HEK293 (cell line): ENCODE measurements at regions of chr5 and their contacts with region 1.

Region 1: DNA sequence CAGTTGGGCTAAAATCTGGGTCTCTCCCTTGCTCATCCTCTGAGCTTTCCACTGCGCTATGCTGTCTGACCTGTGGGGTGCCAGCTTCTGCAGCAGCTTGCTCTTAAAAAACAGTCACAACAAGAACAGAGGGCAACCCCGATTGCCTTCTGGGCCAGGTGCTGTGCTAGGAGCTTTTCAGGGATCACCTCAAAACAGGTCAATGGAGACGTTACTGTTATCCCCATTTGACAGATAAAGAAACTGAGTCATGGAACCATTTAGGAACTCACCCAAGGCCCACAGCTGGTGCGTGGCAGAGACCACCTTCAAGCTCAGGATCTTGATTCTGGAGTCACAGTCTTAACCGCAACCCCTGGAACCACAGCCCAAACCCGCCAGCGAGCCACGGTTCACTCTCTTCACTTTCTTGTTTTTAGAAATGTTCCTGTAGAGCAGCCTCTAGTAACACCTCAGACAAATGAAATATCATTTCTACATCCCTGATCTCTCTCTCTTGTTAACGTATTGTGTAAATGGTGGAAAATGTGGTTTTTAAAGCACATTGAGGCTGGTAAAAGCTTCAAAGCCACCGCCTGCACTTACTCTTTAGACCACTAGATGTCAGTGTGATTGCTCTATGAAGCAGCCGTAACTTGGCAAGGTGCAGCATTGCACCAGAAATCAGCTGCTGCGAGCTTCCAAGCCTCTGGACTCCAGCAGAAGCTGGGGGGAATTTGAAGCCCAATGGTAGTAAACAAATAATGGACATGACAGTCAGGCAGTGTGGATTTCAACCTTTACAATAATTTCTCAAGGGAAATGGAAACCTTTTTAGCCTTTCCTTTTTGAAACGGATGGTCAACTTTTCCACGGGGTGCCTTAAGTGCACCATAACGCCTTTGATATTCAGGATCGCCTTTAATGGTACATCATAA is 1.7 kb downstream of the FYB1 start:
- H3K4me3 ChIP-seq: no peak overlapping the region
- H3K27ac ChIP-seq: no peak overlapping the region
- H3K4me1 ChIP-seq: no peaks in the 10 kb centered on the region
- CTCF ChIP-seq: peak; percentile 80

Region 2: DNA sequence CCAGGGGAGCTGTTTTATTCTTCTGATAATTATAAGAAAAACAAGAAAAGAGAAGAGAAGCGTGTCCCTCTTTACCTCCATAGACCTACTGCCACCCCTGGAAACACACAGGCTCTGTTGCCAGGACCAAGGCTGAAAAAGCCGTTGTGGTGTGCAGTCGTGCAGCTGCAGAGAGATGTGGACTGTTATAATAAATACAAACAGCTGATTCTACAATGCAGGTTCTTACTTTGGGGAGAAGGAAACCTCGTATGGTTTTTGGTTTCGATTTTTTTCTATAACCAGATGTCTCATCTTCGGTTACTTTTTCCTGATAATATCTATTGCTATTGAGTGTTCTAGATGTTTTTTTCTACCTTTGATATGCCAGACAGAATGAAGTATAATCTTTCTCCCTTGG is 26.4 kb before region 1 on chr5:
- CTCF ChIA-PET with region 1: interaction called, 18 read pairs
- POLR2A ChIA-PET with region 1: no interaction called
- H3K4me3 ChIP-seq: no peak overlapping the region
- H3K27ac ChIP-seq: no peak overlapping the region
- H3K4me1 ChIP-seq: no peaks in the 10 kb centered on the region
- CTCF ChIP-seq: no peak

Region 3: GRCh38 chr5:39231705-39232525 is 14.3 kb after region 1 on chr5:
- CTCF ChIA-PET with region 1: interaction called, 28 read pairs
- POLR2A ChIA-PET with region 1: no interaction called
- H3K4me3 ChIP-seq: no peak overlapping the region
- H3K27ac ChIP-seq: no peak overlapping the region
- H3K4me1 ChIP-seq: no peaks in the 10 kb centered on the region
- CTCF ChIP-seq: no peak

Region 4: DNA sequence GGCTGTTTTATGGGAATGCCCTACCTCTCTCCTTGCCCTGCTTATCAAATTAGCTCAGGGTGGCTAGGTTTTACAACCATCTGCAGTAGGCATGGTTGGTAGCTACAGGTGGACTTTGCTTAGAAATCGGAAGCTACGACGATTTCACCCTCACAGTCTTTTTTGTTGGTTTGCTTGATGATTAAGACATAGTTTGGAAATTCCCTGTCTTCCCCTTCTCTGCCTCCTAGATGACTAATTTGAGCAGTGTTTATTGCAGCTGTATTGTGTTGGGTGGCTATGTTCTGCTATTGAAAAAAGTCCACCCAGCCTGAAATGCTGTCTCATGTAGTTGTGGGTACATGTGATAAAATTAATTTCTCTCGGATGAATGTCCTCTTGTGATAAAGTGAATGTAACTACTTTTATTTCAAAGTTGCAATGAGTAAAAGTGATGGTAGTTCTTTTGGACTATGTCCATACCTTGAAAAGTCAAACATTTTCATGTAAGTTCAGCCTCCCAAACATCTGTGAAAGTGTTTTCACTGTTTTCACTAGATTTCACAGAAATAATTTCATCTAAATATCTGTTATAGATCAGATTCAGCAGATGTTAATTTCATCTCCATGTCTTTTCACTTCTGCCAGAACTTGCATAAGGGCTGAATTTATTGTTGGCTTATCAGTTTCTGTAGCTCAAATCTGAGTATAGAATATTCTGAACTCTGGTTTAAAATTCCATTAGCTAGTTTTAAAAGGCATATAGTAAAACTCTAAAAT is 39.0 kb after region 1 on chr5:
- CTCF ChIA-PET with region 1: no interaction called
- POLR2A ChIA-PET with region 1: no interaction called
- H3K4me3 ChIP-seq: no peak overlapping the region
- H3K27ac ChIP-seq: no peak overlapping the region
- H3K4me1 ChIP-seq: no peaks in the 10 kb centered on the region
- CTCF ChIP-seq: no peak

Region 5: DNA sequence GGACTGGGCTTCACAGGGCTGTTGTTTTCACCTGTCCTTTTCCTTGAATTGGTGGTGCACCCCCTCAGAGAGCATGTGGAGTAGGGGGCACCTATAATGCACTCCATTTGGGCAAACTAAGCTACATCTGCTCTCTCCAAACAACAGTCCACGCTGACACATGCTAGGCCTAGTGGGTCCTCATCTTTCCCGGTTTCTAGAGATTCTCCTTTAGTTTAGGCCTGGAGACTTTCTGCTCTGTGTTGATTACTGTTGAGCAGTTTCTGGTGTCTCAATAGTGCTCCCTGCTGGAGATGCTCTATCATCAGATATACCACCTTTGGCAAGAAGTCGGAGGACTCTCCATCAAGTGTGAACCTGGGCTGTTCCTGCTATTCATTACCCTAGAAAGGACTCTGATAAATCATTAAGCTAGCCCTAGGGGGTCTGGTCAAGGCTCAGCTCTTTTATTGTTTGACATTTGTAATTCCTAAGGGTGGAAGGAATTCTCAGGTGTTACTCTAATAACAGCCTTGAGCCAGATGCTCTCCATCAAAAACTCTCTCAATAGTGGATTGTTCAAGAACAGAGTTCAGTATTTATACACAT is 65.7 kb after region 1 on chr5:
- CTCF ChIA-PET with region 1: interaction called, 18 read pairs
- POLR2A ChIA-PET with region 1: no interaction called
- H3K4me3 ChIP-seq: no peak overlapping the region
- H3K27ac ChIP-seq: no peak overlapping the region
- H3K4me1 ChIP-seq: no peaks in the 10 kb centered on the region
- CTCF ChIP-seq: no peak

Region 6: DNA sequence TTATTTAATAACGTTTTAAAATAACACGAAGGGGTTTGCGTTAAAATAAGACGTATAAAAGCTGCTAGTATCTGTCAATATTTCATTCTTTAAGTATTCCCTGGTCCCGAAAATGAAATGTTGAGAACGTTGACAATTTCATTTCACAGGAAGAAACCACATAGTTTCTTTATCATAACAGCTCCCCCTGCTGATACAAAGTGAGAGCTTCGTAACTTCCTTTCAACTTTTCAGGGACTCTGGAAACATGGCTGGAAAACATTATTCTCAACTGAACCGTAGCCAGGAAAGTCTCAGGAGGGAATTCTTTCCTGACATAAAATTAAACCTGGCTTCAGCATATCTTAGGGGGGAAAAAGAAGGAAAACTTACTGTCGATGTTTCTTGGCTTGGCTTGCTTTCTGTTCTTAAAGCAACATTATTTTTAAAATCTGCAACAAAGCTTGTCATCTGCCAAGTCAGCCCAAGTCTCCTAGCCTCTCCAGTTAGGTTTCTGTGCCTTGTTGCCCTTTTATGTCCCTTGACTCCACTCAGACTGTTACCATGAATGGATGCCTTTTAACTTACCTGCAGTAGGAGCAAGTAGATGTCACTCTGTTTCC is 330.0 kb after region 1 on chr5:
- CTCF ChIA-PET with region 1: interaction called, 41 read pairs
- POLR2A ChIA-PET with region 1: no interaction called
- H3K4me3 ChIP-seq: no peak overlapping the region
- H3K27ac ChIP-seq: no peak overlapping the region
- H3K4me1 ChIP-seq: no peaks in the 10 kb centered on the region
- CTCF ChIP-seq: peak; percentile 35; the same call in 1 of the 2 replicates